ENCODE measurements at regions of chr10 and their contacts with region 1.

Region 1: DNA sequence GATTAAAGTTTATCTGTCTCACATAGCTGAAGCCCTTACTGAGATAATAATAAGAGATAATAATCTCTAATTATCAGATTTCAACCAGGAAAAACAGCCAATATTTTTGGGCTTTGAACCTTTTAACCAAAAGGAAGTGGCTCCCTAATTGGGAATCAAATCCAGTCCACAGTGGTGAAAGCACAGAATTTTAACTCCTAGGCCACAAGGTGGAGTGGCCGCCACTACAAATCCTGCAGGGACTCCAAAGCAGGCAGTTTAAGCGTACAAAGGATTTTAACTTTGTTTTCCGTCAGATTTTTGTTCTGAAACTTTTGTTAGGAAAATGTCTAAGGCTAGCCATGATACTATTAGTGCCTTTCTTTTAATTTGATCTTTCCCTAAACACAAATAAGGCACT is 99.6 kb upstream of the CCNY start:
- DNase-seq: no peak
- H3K4me3 ChIP-seq: no peak overlapping the region
- H3K27ac ChIP-seq: no peak overlapping the region
- H3K4me1 ChIP-seq: no peaks in the 10 kb centered on the region
- H3K27me3 ChIP-seq: no peaks in the 10 kb centered on the region
- CTCF ChIP-seq: no peak
- EP300 ChIP-seq: no peak
- POLR2A ChIP-seq: no peak

Region 2: GRCh38 chr10:35563261-35563891 is 326.6 kb after region 1 on chr10:
- in situ Hi-C with region 1: loop called in 2 of 4 experiments (anchors 25 kb)
- intact Hi-C with region 1: no loop called
- DNase-seq: peak; percentile 60
- H3K4me3 ChIP-seq: no peak overlapping the region
- H3K27ac ChIP-seq: no peak overlapping the region
- H3K4me1 ChIP-seq: peaks cover 0 to 21% (median 7%) of the 10 kb centered on the region in 4 donors
- H3K27me3 ChIP-seq: no peaks in the 10 kb centered on the region
- CTCF ChIP-seq: peak; percentile 87 to 98 (median 97)
- EP300 ChIP-seq: no peak
- POLR2A ChIP-seq: no peak

Region 3: DNA sequence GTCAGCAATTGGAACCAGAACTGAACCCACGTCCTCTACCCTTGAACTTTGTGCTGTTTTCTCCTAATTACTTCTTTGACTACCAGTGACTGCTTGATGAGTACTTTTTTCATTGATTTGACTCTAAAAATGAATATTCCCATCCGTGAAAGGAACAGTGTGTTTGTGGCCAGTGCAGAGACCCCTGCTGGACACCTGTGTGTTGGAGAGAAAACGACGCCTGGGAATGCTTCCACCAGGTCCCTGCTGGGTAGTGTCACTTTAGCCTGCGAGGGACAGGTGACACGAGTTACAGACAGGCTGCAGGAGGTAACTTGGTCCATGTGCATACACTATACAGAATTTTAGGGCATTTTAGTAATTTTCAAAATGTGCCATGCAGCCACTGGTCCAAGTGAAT is 361.6 kb after region 1 on chr10:
- in situ Hi-C with region 1: loop called in 1 of 4 experiments (anchors 25 kb)
- intact Hi-C with region 1: no loop called
- DNase-seq: no peak
- H3K4me3 ChIP-seq: no peak overlapping the region
- H3K27ac ChIP-seq: no peak overlapping the region
- H3K4me1 ChIP-seq: no peaks in the 10 kb centered on the region
- H3K27me3 ChIP-seq: no peaks in the 10 kb centered on the region
- CTCF ChIP-seq: peak in 3 of 5 experiments; percentile 8 to 15 (median 11)
- EP300 ChIP-seq: no peak
- POLR2A ChIP-seq: no peak

Measured in transverse colon (tissue), 4 donors.